K562 (cell line): ENCODE measurements at regions of chr1 and their contacts with region 1.

Region 1: GRCh38 chr1:177948336-177948972 is 21.4 kb downstream of the SEC16B start:
- DNase-seq: peak; percentile 54 to 64 (median 62)
- ATAC-seq: peak; percentile 86
- H3K4me3 ChIP-seq: no peak overlapping the region
- H3K27ac ChIP-seq: no peak overlapping the region
- H3K4me1 ChIP-seq: no peaks in the 10 kb centered on the region
- H3K27me3 ChIP-seq: peaks cover 0 to 6% of the 10 kb centered on the region in 2 experiments; a peak in 1 of 5 replicates
- CTCF ChIP-seq: peak; percentile 78 to 84 (median 80)
- EP300 ChIP-seq: no peak
- POLR2A ChIP-seq: no peak
- RAD21 ChIP-seq: peak in 1 of 2 experiments; percentile 51; a peak in 2 of 4 replicates

Region 2: DNA sequence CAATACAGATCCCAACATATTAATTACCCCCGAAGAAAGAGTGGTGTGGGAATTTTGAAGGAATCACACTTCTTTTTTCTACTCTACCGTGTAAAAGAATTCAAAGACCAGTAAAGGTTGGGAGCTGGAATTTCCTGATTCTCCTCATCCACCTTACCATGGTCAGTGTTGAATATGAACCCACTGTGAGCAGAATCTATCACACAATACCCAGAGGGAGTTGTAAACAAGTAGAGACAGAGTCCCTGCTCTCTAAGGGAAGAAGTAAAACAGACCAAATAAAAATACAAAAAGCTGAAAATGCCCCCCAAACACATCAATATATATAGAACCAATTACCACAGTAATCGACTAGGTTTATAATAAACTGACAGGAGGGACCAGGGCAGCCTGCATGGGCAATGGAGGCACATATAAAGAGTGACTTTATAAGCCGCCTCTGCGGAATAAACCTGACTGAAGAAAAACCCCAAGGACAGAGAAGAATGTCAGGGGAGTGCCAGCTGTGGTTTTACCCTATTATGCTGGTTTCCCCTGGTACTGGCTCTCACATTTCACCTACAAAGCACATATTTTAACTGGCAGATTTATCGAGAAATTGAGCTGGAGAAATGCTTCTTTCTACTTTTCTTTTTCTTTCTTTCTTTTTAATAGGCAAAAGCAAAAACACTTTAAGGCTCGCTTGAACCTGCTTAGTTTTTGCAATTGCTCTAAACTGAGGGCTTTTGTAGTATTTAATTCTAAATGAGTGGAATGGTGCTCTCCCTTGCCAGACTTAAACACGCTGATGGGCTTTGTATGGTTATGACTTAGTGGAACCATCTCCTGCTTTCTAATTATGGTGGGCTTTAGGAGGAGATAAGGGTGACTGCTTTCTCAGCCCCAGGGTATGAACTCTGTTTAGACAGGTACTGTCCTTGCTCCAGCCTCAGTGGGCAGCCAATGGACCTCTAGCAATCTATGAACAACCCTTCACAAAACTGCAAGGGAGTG is 1028.8 kb before region 1 on chr1:
- CTCF ChIA-PET with region 1: interaction called, 3 read pairs
- POLR2A ChIA-PET with region 1: no interaction called
- in situ Hi-C with region 1: loop called (anchors 5 kb)
- intact Hi-C with region 1: no loop called
- DNase-seq: no peak
- ATAC-seq: no peak
- H3K4me3 ChIP-seq: no peak overlapping the region
- H3K27ac ChIP-seq: no peak overlapping the region
- H3K4me1 ChIP-seq: no peaks in the 10 kb centered on the region
- H3K27me3 ChIP-seq: peaks cover 3 to 20% of the 10 kb centered on the region in 2 experiments; a peak in 2 of 5 replicates
- CTCF ChIP-seq: no peak
- EP300 ChIP-seq: no peak
- POLR2A ChIP-seq: no peak
- RAD21 ChIP-seq: no peak

Region 3: GRCh38 chr1:176949033-176949662 is 999.3 kb before region 1 on chr1:
- CTCF ChIA-PET with region 1: no interaction called
- POLR2A ChIA-PET with region 1: no interaction called
- in situ Hi-C with region 1: no loop called
- intact Hi-C with region 1: loop called (anchors 5 kb)
- DNase-seq: peak; percentile 83 to 87 (median 85)
- ATAC-seq: peak; percentile 100
- H3K4me3 ChIP-seq: no peak overlapping the region
- H3K27ac ChIP-seq: no peak overlapping the region
- H3K4me1 ChIP-seq: no peaks in the 10 kb centered on the region
- H3K27me3 ChIP-seq: peaks cover 0 to 9% of the 10 kb centered on the region in 2 experiments; a peak in 1 of 5 replicates
- CTCF ChIP-seq: peak; percentile 97 to 99 (median 97)
- EP300 ChIP-seq: no peak
- POLR2A ChIP-seq: no peak
- RAD21 ChIP-seq: peak; percentile 51 to 84

Region 4: DNA sequence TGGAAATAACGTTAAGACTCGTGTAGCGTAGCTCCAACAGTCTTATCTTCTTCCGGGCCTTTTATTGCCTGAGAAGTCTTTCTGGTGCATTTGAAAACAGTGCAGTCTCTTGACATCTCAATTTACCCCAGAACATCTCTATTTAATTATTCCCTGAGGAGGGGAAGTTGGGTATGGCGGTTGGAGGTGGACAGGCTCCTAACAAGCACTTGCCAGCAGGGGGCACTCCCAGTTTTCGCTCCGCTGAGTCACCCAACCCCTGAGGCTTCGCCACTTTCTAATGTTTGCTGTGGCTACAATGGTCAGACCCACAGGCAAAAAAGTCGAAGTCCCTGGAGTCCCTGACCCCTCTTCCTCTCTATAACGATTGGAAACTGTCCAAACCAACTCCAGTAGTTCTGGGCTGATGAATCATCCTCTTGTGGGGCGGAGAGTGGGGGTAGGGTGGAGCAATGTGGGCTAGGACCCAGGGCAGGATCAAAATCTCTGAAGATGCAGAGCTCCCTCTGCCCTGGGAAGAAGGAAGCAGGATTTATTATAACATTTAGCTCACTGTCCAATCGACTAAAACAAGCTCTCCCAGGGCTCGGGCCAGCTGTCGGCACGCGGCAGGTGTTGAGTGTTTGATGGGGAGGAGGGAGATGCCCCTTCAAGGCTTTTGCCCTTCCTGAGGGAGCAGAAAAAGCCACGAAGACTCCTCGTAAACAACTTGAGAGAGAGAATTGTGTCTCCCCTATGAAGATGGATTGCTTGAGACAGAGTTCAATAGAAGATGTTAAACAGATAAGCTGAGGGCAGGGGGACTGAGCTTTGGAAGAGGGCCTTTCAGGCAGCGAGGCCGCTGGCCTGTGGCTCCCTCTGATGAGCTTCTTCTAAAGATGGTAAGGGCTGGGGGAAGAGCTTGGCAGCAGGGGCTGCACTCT is 692.0 kb before region 1 on chr1:
- CTCF ChIA-PET with region 1: no interaction called
- POLR2A ChIA-PET with region 1: no interaction called
- in situ Hi-C with region 1: no loop called
- intact Hi-C with region 1: loop called (anchors 10 kb)
- DNase-seq: peak; percentile 13 to 45 (median 30)
- ATAC-seq: peak; percentile 78
- H3K4me3 ChIP-seq: no peak overlapping the region
- H3K27ac ChIP-seq: no peak overlapping the region
- H3K4me1 ChIP-seq: no peaks in the 10 kb centered on the region
- H3K27me3 ChIP-seq: no peaks in the 10 kb centered on the region
- CTCF ChIP-seq: peak; percentile 18 to 56 (median 27); a peak in 3 of 6 replicates
- EP300 ChIP-seq: no peak
- POLR2A ChIP-seq: no peak
- RAD21 ChIP-seq: peak; percentile 28 to 38; a peak in 3 of 4 replicates

Region 5: DNA sequence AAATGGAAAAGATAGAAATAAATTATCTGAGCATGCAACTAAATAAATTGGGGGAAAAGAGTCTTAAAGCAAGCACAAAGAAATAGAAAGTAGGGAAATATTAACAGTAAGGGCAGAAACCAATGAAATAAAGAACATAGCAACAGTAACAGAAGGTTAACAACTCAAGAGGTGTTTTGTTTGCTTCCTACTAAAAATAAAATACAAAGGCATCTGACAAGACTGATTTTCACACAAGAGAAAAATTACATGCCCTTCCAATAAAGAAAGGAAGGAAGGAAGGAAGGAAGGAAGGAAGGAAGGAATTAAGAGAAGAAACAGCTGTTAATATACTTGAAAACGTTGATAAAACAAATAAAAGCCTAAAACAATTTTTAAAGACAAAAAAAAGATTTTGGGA is 218.8 kb before region 1 on chr1:
- CTCF ChIA-PET with region 1: no interaction called
- POLR2A ChIA-PET with region 1: no interaction called
- in situ Hi-C with region 1: no loop called
- intact Hi-C with region 1: no loop called
- DNase-seq: no peak
- ATAC-seq: no peak
- H3K4me3 ChIP-seq: no peak overlapping the region
- H3K27ac ChIP-seq: no peak overlapping the region
- H3K4me1 ChIP-seq: no peaks in the 10 kb centered on the region
- H3K27me3 ChIP-seq: no peaks in the 10 kb centered on the region
- CTCF ChIP-seq: no peak
- EP300 ChIP-seq: no peak
- POLR2A ChIP-seq: no peak
- RAD21 ChIP-seq: no peak

Region 6: DNA sequence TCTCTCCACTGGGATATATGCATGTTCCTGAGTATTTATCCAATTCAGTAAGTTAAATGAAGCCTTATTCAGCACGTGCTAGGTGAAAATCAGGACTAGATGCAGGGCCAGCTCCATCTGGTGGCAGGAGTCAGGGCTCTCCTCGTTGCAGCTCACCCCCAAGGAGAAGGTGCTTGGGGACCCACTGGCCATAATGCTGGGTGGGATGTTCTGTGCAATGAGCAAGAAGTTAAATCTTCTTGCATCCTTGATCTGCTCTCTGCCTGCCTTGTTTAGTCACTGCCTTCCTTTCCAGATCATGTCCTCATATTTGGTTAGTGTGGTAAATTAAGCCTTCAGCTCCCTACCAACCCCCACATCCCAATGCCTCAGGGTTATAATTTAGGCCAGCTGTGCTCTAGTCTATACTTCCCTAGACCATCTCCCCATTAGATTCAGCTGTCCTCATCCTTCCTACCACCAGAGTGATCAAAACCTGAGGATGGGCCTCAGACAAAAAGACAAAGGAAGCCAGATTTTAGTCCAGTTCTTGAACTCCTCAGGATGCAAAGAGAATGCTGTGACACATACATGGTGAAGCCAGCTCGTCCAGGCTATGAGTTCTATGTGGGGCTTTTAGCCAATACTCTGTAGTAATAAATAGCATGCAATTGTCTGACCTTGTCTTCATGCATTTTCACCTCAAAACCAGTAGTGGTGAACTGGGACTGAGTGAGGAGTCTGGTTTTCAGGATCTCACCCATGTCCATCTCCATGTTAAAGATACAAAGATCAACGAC is 34.5 kb before region 1 on chr1:
- CTCF ChIA-PET with region 1: no interaction called
- POLR2A ChIA-PET with region 1: no interaction called
- in situ Hi-C with region 1: no loop called
- intact Hi-C with region 1: no loop called
- DNase-seq: no peak
- ATAC-seq: peak; percentile 49; the same call in 2 of the 3 replicates
- H3K4me3 ChIP-seq: no peak overlapping the region
- H3K27ac ChIP-seq: no peak overlapping the region
- H3K4me1 ChIP-seq: no peaks in the 10 kb centered on the region
- H3K27me3 ChIP-seq: no peaks in the 10 kb centered on the region
- CTCF ChIP-seq: peak in 2 of 3 experiments; percentile 13 to 20; a peak in 1 of 6 replicates
- EP300 ChIP-seq: no peak
- POLR2A ChIP-seq: no peak
- RAD21 ChIP-seq: no peak; a peak in 1 of 4 replicates

Region 7: DNA sequence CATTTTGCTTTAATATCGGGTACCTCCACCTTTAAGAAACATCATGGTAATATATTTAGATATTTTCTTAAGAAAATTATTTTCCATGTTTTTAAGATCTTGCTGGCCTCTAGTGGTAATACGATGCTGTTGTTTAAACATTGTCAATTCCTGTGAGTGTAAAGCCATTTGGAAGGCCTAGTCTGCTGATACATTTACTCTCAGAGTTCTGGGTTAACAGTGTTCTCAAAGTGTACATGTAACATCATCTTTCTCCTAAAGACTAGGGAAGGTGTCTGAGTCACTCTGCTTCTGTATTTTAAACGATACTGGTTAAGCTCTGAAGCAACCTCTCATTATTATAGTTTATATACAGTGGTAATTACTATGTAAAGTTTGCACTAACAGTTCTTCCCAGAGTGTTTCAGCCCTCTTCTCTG is 334.5 kb after region 1 on chr1:
- CTCF ChIA-PET with region 1: no interaction called
- POLR2A ChIA-PET with region 1: no interaction called
- in situ Hi-C with region 1: no loop called
- intact Hi-C with region 1: loop called (anchors 2 kb)
- DNase-seq: peak in 1 of 4 experiments; percentile 4
- ATAC-seq: 0 out of 3 replicates have a peak, but pooled peaks have one; percentile 34
- H3K4me3 ChIP-seq: no peak overlapping the region
- H3K27ac ChIP-seq: no peak overlapping the region
- H3K4me1 ChIP-seq: no peaks in the 10 kb centered on the region
- H3K27me3 ChIP-seq: no peaks in the 10 kb centered on the region
- CTCF ChIP-seq: peak; percentile 12 to 36 (median 23); a peak in 3 of 6 replicates
- EP300 ChIP-seq: no peak
- POLR2A ChIP-seq: no peak
- RAD21 ChIP-seq: peak; percentile 8 to 15; a peak in 1 of 4 replicates

Region 8: GRCh38 chr1:178310685-178311105 is 362.2 kb after region 1 on chr1:
- CTCF ChIA-PET with region 1: no interaction called
- POLR2A ChIA-PET with region 1: no interaction called
- in situ Hi-C with region 1: no loop called
- intact Hi-C with region 1: no loop called
- DNase-seq: peak; percentile 52 to 58 (median 54)
- ATAC-seq: peak; percentile 85
- H3K4me3 ChIP-seq: no peak overlapping the region
- H3K27ac ChIP-seq: no peak overlapping the region
- H3K4me1 ChIP-seq: no peaks in the 10 kb centered on the region
- H3K27me3 ChIP-seq: no peaks in the 10 kb centered on the region
- CTCF ChIP-seq: peak; percentile 45 to 82 (median 70); a peak in 5 of 6 replicates
- EP300 ChIP-seq: no peak
- POLR2A ChIP-seq: no peak
- RAD21 ChIP-seq: peak; percentile 72 to 76